HCT116 (cell line): ENCODE measurements at regions of chr12 and their contacts with region 1.

Region 1: DNA sequence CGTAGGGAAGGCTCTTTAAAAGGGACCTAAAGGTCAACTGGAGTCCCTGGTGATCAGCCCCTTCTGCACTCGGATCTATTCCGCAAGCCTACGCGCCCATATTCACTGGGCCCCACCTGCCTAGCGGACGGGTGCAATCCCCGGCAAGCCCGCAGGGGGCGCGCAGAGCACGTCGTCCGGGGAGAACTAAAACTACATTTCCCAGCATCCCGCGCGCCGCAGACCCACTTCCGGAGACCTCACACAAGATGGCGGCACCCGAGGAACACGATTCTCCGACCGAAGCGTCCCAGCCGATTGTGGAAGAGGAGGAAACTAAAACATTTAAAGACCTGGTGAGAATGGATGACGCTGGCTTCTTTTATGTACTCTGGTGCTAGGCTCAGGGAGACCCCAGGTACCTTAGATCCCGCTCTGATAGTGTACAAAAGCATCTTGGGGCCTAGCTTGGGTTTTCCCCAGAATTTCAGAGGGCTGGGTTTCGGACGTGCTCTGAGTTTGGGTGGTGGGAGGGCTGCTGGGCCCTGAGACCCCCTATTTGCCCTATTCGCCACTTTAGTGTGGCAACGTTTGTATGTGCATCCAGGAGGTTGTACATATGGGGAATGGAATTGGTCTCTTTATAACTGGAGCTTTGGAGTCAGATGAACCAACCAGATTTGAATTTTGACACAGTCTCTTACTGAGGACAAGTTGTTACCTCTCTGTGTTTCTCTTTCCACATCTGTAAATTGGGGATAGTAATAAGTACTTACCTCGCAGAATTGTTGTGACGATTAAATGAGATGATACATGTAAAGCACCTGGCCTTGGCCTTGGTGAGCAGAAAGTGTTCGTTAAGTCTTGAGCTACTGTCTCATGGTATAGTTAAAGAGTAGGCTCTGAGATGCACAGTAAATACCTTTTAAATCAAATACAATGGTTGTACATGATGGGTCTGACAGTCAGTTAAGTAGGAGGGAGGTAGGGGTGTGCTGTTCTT is at the start of gene DDX47:
- DNase-seq: peak; percentile 82
- ATAC-seq: peak; percentile 93
- H3K4me3 ChIP-seq: peak within 1 kb of the TSS; percentile 91 to 95
- H3K27ac ChIP-seq: peak within 1 kb of the TSS; percentile 67
- H3K4me1 ChIP-seq: peaks cover 12 to 61% of the 10 kb centered on the region in 2 experiments; a peak in 3 of 4 replicates
- H3K27me3 ChIP-seq: no peaks in the 10 kb centered on the region
- CTCF ChIP-seq: peak; percentile 86 to 90 (median 88)
- POLR2A ChIP-seq: peak; percentile 65
- RAD21 ChIP-seq: peak; percentile 63
- total RNA-seq, gene DDX47: 103 TPM

Region 2: GRCh38 chr12:12606781-12607589 is 206.4 kb before region 1 on chr12:
- CTCF ChIA-PET with region 1: no interaction called
- POLR2A ChIA-PET with region 1: no interaction called
- RAD21 ChIA-PET with region 1: no interaction called
- intact Hi-C with region 1: no loop called
- DNase-seq: no peak
- ATAC-seq: no peak
- H3K4me3 ChIP-seq: no peak overlapping the region
- H3K27ac ChIP-seq: no peak overlapping the region
- H3K4me1 ChIP-seq: peaks cover 7 to 9% of the 10 kb centered on the region in 2 experiments
- H3K27me3 ChIP-seq: no peaks in the 10 kb centered on the region
- CTCF ChIP-seq: no peak
- POLR2A ChIP-seq: no peak
- RAD21 ChIP-seq: no peak

Region 3: DNA sequence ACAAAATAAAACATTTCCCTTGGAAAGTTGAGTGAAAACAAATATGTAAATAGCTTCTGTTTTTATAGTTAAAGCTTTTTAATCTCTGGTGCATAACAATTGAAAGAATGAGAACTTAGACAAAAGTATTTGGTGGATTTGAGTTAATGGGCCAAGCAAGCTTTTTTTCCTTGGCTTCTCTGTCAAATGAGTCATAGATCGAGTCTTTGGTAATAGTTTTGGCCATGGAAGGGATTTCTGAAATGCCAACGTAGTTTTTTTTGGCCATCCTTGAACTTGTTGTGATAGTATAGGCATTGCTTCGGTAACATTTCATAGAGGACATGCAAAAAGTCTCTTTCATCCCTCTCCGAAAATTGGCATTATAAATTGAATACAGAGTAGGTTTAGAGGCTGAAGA is 152.3 kb before region 1 on chr12:
- CTCF ChIA-PET with region 1: no interaction called
- POLR2A ChIA-PET with region 1: no interaction called
- RAD21 ChIA-PET with region 1: no interaction called
- intact Hi-C with region 1: no loop called
- DNase-seq: no peak
- ATAC-seq: no peak
- H3K4me3 ChIP-seq: no peak overlapping the region
- H3K27ac ChIP-seq: no peak overlapping the region
- H3K4me1 ChIP-seq: no peaks in the 10 kb centered on the region
- H3K27me3 ChIP-seq: no peaks in the 10 kb centered on the region
- CTCF ChIP-seq: no peak
- POLR2A ChIP-seq: no peak
- RAD21 ChIP-seq: no peak

Region 4: GRCh38 chr12:12786716-12787601 is 26.5 kb before region 1 on chr12:
- CTCF ChIA-PET with region 1: interaction called, 11 read pairs
- POLR2A ChIA-PET with region 1: no interaction called
- RAD21 ChIA-PET with region 1: no interaction called
- intact Hi-C with region 1: no loop called
- DNase-seq: no peak
- ATAC-seq: peak; percentile 83
- H3K4me3 ChIP-seq: peak overlapping the region; percentile 20 to 47
- H3K27ac ChIP-seq: peak overlapping the region; percentile 21; the same call in 1 of the 2 replicates
- H3K4me1 ChIP-seq: peaks cover 6 to 47% of the 10 kb centered on the region in 2 experiments; a peak in 3 of 4 replicates
- H3K27me3 ChIP-seq: no peaks in the 10 kb centered on the region
- CTCF ChIP-seq: no peak
- POLR2A ChIP-seq: no peak
- RAD21 ChIP-seq: no peak

Region 5: DNA sequence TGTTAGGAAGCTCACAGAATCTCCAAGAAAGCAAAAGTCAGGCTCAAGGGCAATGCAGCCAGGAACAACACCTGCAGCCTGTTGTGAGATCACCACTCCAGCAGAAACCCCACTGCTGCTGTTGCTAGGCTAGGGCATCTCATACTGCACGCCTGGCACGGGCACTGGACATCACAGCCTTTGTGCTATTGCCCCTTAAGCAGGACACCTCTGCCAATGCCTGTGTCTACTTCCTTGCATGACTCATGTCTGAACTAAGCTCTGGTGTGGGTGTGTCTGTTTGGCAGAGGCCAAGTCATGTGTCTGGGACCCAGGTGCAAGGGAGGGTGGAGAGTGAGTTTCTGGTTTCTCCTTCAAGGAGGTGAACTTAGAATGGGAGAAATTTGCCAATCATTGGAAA is 10.2 kb before region 1 on chr12:
- CTCF ChIA-PET with region 1: interaction called, 12 read pairs
- POLR2A ChIA-PET with region 1: interaction called, 9 read pairs
- RAD21 ChIA-PET with region 1: no interaction called
- intact Hi-C with region 1: no loop called
- DNase-seq: peak; percentile 92
- ATAC-seq: peak; percentile 94
- H3K4me3 ChIP-seq: peak overlapping the region in 1 of 2 experiments; percentile 45; a peak in 2 of 4 replicates
- H3K27ac ChIP-seq: peak overlapping the region; percentile 40; the same call in 1 of the 2 replicates
- H3K4me1 ChIP-seq: peaks cover 34 to 64% of the 10 kb centered on the region in 2 experiments
- H3K27me3 ChIP-seq: no peaks in the 10 kb centered on the region
- CTCF ChIP-seq: no peak
- POLR2A ChIP-seq: no peak
- RAD21 ChIP-seq: peak; percentile 18; the same call in 1 of the 2 replicates

Region 6: GRCh38 chr12:12908252-12908651 is 94.8 kb after region 1 on chr12:
- CTCF ChIA-PET with region 1: no interaction called
- POLR2A ChIA-PET with region 1: no interaction called
- RAD21 ChIA-PET with region 1: no interaction called
- intact Hi-C with region 1: no loop called
- DNase-seq: no peak
- ATAC-seq: no peak
- H3K4me3 ChIP-seq: no peak overlapping the region
- H3K27ac ChIP-seq: no peak overlapping the region
- H3K4me1 ChIP-seq: peaks cover 32 to 68% of the 10 kb centered on the region in 2 experiments
- H3K27me3 ChIP-seq: no peaks in the 10 kb centered on the region
- CTCF ChIP-seq: no peak
- POLR2A ChIP-seq: no peak
- RAD21 ChIP-seq: no peak

Region 7: GRCh38 chr12:12983420-12984035 is 170.1 kb after region 1 on chr12:
- CTCF ChIA-PET with region 1: interaction called, 4 read pairs
- POLR2A ChIA-PET with region 1: no interaction called
- RAD21 ChIA-PET with region 1: interaction called in 1 of 2 experiments, 4 read pairs
- intact Hi-C with region 1: loop called (anchors 10 kb)
- DNase-seq: peak; percentile 33
- ATAC-seq: peak; percentile 81
- H3K4me3 ChIP-seq: no peak overlapping the region
- H3K27ac ChIP-seq: no peak overlapping the region
- H3K4me1 ChIP-seq: no peaks in the 10 kb centered on the region
- H3K27me3 ChIP-seq: no peaks in the 10 kb centered on the region
- CTCF ChIP-seq: peak; percentile 59 to 79 (median 69); a peak in 5 of 6 replicates
- POLR2A ChIP-seq: no peak
- RAD21 ChIP-seq: peak; percentile 85

Region 8: GRCh38 chr12:13094347-13094746 is 280.9 kb after region 1 on chr12:
- CTCF ChIA-PET with region 1: no interaction called
- POLR2A ChIA-PET with region 1: no interaction called
- RAD21 ChIA-PET with region 1: no interaction called
- intact Hi-C with region 1: loop called (anchors 10 kb)
- DNase-seq: no peak
- ATAC-seq: no peak
- H3K4me3 ChIP-seq: peak overlapping the region in 1 of 2 experiments; percentile 20; a peak in 2 of 4 replicates
- H3K27ac ChIP-seq: no peak overlapping the region; the same call in 1 of the 2 replicates
- H3K4me1 ChIP-seq: peaks cover 26 to 56% of the 10 kb centered on the region in 2 experiments
- H3K27me3 ChIP-seq: no peaks in the 10 kb centered on the region
- CTCF ChIP-seq: no peak
- POLR2A ChIP-seq: no peak
- RAD21 ChIP-seq: no peak